Activated B cell treated with CpG ODN at 0.5 μM for 24 hours (primary cell): ENCODE measurements at regions of chr10 and their contacts with region 1.

Region 1: DNA sequence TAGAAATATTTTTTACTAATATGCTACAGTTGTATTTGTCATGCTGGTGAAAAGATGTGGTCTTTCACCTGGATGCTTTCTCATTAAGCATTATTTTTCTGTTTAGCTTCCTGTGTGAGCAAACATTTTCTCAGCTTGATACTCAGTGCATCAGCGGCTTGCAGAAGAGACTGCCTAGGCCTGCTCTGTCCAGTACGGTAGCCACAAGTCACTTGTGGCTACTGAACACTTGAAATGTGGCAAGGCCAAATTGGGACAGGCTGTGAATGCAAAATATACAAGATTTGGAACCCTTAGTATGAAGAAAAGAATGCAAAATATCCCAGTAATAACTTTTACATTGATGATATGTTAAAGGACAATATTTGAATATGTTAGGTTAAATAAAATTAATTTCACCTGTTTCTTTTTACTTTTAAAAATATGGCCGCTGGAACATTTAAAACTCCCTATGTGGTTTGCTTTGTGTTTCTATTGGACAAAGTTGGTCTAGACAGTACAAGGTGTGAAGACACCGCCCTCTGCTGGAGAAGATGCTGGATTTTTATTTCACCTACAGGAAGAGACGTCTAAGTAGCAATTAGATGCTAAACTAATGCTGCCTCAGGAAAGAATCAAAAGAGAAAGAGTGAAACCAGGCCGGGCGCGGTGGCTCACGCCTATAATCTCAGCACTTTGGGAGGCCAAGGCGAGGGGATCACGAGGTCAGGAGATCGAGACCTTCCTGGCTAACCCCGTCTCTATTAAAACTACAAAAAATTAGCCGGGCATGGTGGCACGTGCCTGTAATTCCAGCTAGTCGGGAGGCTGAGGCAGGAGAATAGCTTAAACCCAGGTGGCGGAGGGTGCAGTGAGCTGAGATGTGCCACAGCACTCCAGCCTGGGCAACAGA is 5.3 kb downstream of the SRGN start:
- DNase-seq: peak; percentile 27
- ATAC-seq: peak; percentile 59
- H3K4me3 Mint-ChIP-seq: no peak overlapping the region
- H3K27ac Mint-ChIP-seq: peak overlapping the region; percentile 8
- H3K4me1 Mint-ChIP-seq: peaks cover 45% of the 10 kb centered on the region
- H3K27me3 Mint-ChIP-seq: no peaks in the 10 kb centered on the region
- CTCF ChIP-seq: peak; percentile 34

Region 2: GRCh38 chr10:68792115-68792514 is 301.1 kb before region 1 on chr10:
- CTCF ChIA-PET with region 1: no interaction called
- POLR2A ChIA-PET with region 1: no interaction called
- intact Hi-C with region 1: loop called (anchors 10 kb)
- DNase-seq: no peak
- ATAC-seq: no peak
- H3K4me3 Mint-ChIP-seq: no peak overlapping the region
- H3K27ac Mint-ChIP-seq: no peak overlapping the region
- H3K4me1 Mint-ChIP-seq: no peaks in the 10 kb centered on the region
- H3K27me3 Mint-ChIP-seq: no peaks in the 10 kb centered on the region
- CTCF ChIP-seq: no peak

Region 3: DNA sequence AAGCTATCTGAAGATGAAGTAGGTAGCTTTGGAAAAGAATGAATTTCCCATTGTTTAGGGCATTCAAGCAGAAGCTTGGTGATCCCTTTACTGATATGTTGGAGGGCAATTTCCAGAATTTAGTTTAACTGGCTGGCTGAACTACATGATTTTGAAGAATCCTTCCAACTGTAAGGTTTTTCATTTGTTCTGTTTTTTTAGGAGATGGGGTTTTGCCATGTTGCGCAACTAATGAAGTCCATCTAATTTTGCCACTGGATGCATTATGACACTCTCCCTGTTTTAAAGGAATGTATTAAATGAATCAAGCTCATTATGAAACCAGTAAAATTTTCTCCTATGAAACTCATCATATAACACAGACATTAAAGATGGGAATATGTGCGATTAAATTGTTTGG is 198.2 kb before region 1 on chr10:
- CTCF ChIA-PET with region 1: no interaction called
- POLR2A ChIA-PET with region 1: no interaction called
- intact Hi-C with region 1: no loop called
- DNase-seq: no peak
- ATAC-seq: no peak
- H3K4me3 Mint-ChIP-seq: no peak overlapping the region
- H3K27ac Mint-ChIP-seq: no peak overlapping the region
- H3K4me1 Mint-ChIP-seq: peaks cover 2% of the 10 kb centered on the region
- H3K27me3 Mint-ChIP-seq: no peaks in the 10 kb centered on the region
- CTCF ChIP-seq: no peak

Region 4: GRCh38 chr10:68988530-68989316 is 104.5 kb before region 1 on chr10 and contains the start of gene KIFBP:
- CTCF ChIA-PET with region 1: interaction called, 16 read pairs
- POLR2A ChIA-PET with region 1: no interaction called
- intact Hi-C with region 1: loop called (anchors 1 kb)
- DNase-seq: peak; percentile 58
- ATAC-seq: peak; percentile 87
- H3K4me3 Mint-ChIP-seq: peak within 1 kb of the TSS; percentile 97
- H3K27ac Mint-ChIP-seq: peak within 1 kb of the TSS; percentile 88
- H3K4me1 Mint-ChIP-seq: peaks cover 40% of the 10 kb centered on the region
- H3K27me3 Mint-ChIP-seq: no peaks in the 10 kb centered on the region
- CTCF ChIP-seq: no peak
- total RNA-seq, gene KIFBP: 6.5 and 7.7 TPM in 2 replicates

Region 5: GRCh38 chr10:69392481-69393000 is 299.3 kb after region 1 on chr10:
- CTCF ChIA-PET with region 1: interaction called, 4 read pairs
- POLR2A ChIA-PET with region 1: no interaction called
- intact Hi-C with region 1: loop called (anchors 1 kb)
- DNase-seq: peak; percentile 62
- ATAC-seq: peak; percentile 99
- H3K4me3 Mint-ChIP-seq: no peak overlapping the region
- H3K27ac Mint-ChIP-seq: no peak overlapping the region
- H3K4me1 Mint-ChIP-seq: peaks cover 16% of the 10 kb centered on the region
- H3K27me3 Mint-ChIP-seq: no peaks in the 10 kb centered on the region
- CTCF ChIP-seq: peak; percentile 94

Region 6: DNA sequence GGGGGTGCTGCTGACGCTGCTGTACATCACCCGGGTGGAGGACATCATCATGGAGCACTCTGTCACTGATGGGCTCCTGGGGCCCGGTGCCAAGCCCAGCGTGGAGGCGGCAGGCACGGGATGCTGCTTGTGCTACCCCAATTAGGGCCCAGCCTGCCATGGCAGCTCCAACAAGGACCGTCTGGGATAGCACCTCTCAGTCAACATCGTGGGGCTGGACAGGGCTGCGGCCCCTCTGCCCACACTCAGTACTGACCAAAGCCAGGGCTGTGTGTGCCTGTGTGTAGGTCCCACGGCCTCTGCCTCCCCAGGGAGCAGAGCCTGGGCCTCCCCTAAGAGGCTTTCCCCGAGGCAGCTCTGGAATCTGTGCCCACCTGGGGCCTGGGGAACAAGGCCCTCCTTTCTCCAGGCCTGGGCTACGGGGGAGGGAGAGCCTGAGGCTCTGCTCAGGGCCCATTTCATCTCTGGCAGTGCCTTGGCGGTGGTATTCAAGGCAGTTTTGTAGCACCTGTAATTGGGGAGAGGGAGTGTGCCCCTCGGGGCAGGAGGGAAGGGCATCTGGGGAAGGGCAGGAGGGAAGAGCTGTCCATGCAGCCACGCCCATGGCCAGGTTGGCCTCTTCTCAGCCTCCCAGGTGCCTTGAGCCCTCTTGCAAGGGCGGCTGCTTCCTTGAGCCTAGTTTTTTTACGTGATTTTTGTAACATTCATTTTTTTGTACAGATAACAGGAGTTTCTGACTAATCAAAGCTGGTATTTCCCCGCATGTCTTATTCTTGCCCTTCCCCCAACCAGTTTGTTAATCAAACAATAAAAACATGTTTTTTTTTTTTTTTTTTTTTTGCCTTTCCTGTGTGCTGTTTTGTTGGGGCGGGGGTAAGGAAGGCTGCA is 413.9 kb after region 1 on chr10:
- CTCF ChIA-PET with region 1: no interaction called
- POLR2A ChIA-PET with region 1: no interaction called
- intact Hi-C with region 1: loop called (anchors 5 kb)
- DNase-seq: no peak
- ATAC-seq: no peak
- H3K4me3 Mint-ChIP-seq: peak overlapping the region; percentile 59
- H3K27ac Mint-ChIP-seq: no peak overlapping the region
- H3K4me1 Mint-ChIP-seq: peaks cover 5% of the 10 kb centered on the region
- H3K27me3 Mint-ChIP-seq: peaks cover 18% of the 10 kb centered on the region
- CTCF ChIP-seq: no peak